ENCODE measurements at regions of chr16 and their contacts with region 1.

Region 1: DNA sequence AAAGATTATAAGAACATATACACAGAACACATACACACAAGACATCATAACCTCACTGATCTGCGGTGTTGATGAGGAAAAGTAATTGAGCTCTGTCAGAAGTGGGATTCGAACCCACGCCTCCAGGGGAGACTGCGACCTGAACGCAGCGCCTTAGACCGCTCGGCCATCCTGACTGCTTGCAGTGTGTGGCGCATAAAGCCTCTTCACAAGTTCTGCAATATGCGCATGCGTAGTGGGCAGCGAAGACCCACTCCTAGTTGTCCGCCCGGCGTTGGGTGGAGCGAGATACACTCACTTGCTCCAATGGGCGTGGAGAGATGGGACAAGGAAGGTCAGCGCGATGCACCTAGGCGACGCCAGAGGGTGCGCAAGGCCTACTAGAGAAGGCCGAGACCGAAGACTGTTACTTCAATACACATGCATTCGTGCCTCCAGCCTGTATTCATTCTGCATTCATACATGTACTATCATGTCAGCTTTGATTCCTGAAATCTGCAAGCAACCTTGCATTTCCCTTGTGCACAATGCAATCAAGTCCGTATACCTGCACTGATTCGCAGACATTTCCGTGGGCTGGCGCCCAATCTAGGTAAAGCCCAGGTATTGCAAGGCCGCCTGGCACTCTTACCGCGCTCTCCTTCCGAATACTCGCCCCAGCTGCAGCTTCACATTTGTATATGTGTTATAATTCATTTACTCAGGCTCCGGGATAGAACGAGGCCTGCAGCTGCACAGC is 16.1 kb upstream of the PLLP start:
- DNase-seq: peak; percentile 98 to 100 (median 99)
- ATAC-seq: peak; percentile 96
- H3K4me3 ChIP-seq: peak overlapping the region; percentile 65
- H3K4me3 Mint-ChIP-seq: no peak overlapping the region
- H3K27ac ChIP-seq: peak overlapping the region; percentile 75
- H3K27ac Mint-ChIP-seq: no peak overlapping the region
- H3K4me1 ChIP-seq: peaks cover 16 to 28% of the 10 kb centered on the region in 2 donors
- H3K4me1 Mint-ChIP-seq: peaks cover 4 to 24% (median 11%) of the 10 kb centered on the region in 7 donors
- H3K27me3 ChIP-seq: no peaks in the 10 kb centered on the region
- H3K27me3 Mint-ChIP-seq: peaks cover 0 to 4% (median 0%) of the 10 kb centered on the region in 5 donors

Region 2: DNA sequence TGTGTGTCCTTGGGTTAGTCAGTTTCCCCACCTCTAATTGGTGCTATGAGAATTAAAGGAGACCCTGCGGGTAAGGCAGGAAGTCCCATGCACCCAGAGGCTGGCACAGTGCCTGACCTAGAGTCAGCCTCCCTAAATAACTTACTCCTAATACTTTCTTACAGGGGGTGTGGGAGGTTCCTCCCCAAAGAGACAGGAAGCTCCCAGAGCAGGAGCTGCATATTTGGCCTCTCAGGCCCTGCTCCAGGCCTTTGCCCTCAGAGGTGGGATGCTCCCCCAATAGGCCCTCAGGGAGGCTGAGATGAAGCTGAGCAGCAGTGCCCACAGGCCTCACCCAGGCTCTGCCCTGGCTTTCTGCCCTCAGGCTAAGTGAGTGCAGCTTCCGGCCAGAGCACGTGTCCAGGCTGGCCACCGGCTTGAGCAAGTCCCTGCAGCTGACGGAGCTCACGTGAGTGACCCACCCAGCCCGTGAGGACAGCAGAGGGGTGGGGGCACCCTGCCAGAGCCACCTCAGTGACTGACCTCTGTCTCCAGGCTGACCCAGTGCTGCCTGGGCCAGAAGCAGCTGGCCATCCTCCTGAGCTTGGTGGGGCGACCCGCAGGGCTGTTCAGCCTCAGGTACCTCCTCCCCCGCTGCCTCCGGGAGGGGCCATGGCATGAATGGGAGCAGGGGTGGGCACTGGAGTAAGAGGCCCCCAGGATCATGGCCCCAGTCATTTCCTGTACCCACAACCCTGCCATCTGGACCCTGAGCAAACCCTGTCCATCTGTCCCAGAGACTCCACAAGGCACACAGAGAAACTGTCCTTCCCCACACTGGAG is 239.3 kb before region 1 on chr16:
- CTCF ChIA-PET with region 1: no interaction called
- POLR2A ChIA-PET with region 1: no interaction called
- intact Hi-C with region 1: no loop called
- DNase-seq: no peak
- ATAC-seq: peak; percentile 50
- H3K4me3 ChIP-seq: no peak overlapping the region
- H3K4me3 Mint-ChIP-seq: peak overlapping the region in 1 of 10 donors; percentile 44
- H3K27ac ChIP-seq: peak overlapping the region; percentile 16
- H3K27ac Mint-ChIP-seq: peak overlapping the region; percentile 8 to 92 (median 75)
- H3K4me1 ChIP-seq: no peaks in the 10 kb centered on the region
- H3K4me1 Mint-ChIP-seq: peaks cover 4 to 32% (median 17%) of the 10 kb centered on the region in 7 donors
- H3K27me3 ChIP-seq: no peaks in the 10 kb centered on the region
- H3K27me3 Mint-ChIP-seq: no peaks in the 10 kb centered on the region

Region 3: GRCh38 chr16:57185944-57186871 is 114.3 kb before region 1 on chr16 and contains the starts of genes PSME3IP1 and RSPRY1:
- CTCF ChIA-PET with region 1: interaction called, 3 read pairs
- POLR2A ChIA-PET with region 1: interaction called, 3 read pairs
- intact Hi-C with region 1: loop called (anchors 1 kb)
- DNase-seq: peak; percentile 86 to 100 (median 99)
- ATAC-seq: peak; percentile 92
- H3K4me3 ChIP-seq: peak within 1 kb of the TSS; percentile 95
- H3K4me3 Mint-ChIP-seq: peak within 1 kb of the TSS; percentile 93 to 100 (median 98)
- H3K27ac ChIP-seq: peak within 1 kb of the TSS; percentile 94
- H3K27ac Mint-ChIP-seq: peak within 1 kb of the TSS; percentile 93 to 99 (median 95)
- H3K4me1 ChIP-seq: peaks cover 20 to 24% of the 10 kb centered on the region in 2 donors
- H3K4me1 Mint-ChIP-seq: peaks cover 41 to 77% (median 59%) of the 10 kb centered on the region in 7 donors
- H3K27me3 ChIP-seq: no peaks in the 10 kb centered on the region
- H3K27me3 Mint-ChIP-seq: peaks cover 0 to 3% (median 0%) of the 10 kb centered on the region in 5 donors
- total RNA-seq, gene PSME3IP1: 109 to 159 (median 140) TPM
- total RNA-seq, gene RSPRY1: 24.1 to 40.5 (median 33.6) TPM

Region 4: DNA sequence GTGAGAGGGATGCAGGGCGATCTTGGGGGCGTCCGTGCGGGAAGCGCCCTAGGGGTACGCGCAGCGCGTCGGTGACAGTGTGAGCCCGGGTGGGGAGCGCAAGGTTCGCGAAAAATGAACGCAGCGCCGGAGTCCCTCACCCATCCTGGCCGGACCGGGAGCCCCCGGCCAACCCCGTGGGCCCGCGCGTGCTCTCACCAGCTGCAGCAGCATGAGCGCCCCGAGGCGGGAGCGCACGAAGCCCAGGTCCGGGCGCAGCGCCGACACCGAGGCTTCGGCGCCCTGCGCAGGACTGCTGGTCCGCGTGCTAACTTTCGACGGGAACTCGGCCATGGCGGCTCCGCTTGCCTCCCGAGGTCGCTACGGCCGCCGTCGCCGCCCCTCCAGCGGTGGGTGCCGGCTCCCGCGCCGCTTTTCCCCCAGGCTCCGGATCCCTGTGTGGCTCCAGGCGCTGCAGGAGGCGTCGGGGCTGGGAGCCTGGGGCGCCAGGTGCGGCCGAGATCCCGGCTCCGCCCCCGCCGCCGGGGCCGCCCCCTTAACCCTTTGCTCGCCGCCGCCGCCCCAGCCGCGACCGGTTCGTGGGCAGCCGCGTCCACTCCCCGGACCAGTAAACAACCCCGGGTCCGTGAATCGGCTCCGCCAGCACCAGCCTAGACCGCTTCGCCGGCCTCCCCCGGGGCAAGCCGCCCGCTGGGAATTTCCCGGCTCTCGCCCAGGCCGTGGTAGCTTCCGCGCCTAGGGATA is 16.2 kb before region 1 on chr16 and contains the start of gene PLLP:
- CTCF ChIA-PET with region 1: interaction called, 9 read pairs
- POLR2A ChIA-PET with region 1: interaction called, 5 read pairs
- intact Hi-C with region 1: loop called (anchors 1 kb)
- DNase-seq: peak; percentile 30 to 66 (median 51)
- ATAC-seq: peak; percentile 82
- H3K4me3 ChIP-seq: peak within 1 kb of the TSS; percentile 60
- H3K4me3 Mint-ChIP-seq: peak within 1 kb of the TSS; percentile 77 to 89 (median 84)
- H3K27ac ChIP-seq: peak within 1 kb of the TSS; percentile 59
- H3K27ac Mint-ChIP-seq: peak within 1 kb of the TSS in 8 of 9 donors; percentile 10 to 94 (median 64)
- H3K4me1 ChIP-seq: peaks cover 0 to 25% of the 10 kb centered on the region in 2 donors
- H3K4me1 Mint-ChIP-seq: peaks cover 20 to 51% (median 41%) of the 10 kb centered on the region in 7 donors
- H3K27me3 ChIP-seq: peaks cover 0 to 8% of the 10 kb centered on the region in 2 donors
- H3K27me3 Mint-ChIP-seq: peaks cover 0 to 41% (median 0%) of the 10 kb centered on the region in 5 donors
- total RNA-seq, gene PLLP: 0.36 to 8.4 (median 3.3) TPM

Region 5: GRCh38 chr16:57341441-57342303 is 41.1 kb after region 1 on chr16:
- CTCF ChIA-PET with region 1: no interaction called
- POLR2A ChIA-PET with region 1: no interaction called
- intact Hi-C with region 1: no loop called
- DNase-seq: no peak
- ATAC-seq: no peak
- H3K4me3 ChIP-seq: no peak overlapping the region
- H3K4me3 Mint-ChIP-seq: no peak overlapping the region
- H3K27ac ChIP-seq: no peak overlapping the region
- H3K27ac Mint-ChIP-seq: no peak overlapping the region
- H3K4me1 ChIP-seq: no peaks in the 10 kb centered on the region
- H3K4me1 Mint-ChIP-seq: peaks cover 0 to 26% (median 16%) of the 10 kb centered on the region in 7 donors
- H3K27me3 ChIP-seq: no peaks in the 10 kb centered on the region
- H3K27me3 Mint-ChIP-seq: peaks cover 17 to 54% (median 32%) of the 10 kb centered on the region in 5 donors

Region 6: DNA sequence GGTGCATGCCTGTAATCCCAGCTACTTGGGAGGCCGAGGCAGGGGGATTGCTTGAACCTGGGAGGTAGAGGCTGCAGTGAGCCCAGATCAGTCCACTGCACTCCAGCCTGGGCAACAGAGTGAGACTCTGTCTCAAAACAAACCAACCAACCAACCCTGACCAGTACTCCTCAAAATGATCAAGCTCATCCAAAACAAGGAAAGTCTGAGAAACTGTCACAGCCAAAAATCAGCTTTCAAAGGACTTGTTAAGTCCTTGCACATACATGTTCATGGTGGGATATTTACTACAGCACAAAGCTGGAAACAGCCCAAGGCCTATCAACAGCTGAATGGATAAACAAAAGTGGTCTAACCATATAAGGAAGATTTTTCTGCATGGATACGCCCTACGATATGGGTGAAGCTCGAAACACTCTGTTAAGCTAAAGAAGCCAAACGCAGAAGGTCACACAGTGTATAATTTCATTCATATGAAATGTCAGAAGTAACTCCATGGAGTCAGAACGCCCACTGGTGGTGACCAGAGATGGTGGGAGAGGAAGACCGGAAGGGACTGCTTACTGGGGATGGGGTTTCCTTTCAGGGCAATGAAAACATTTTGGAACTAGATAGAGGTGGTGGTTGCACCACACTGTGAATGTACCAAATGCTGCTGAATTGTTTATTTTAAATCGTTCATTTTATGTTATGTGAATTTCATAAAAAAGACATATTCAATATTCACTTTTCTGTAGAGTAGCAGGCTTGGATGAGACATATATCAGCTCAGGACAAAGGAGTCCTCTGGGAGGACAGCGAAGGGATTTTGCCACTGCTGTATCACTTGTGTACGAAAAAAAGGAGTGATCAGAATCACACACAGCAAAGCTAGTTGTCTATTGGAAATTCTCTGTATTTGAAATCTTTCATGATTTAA is 121.7 kb after region 1 on chr16:
- CTCF ChIA-PET with region 1: interaction called, 83 read pairs
- POLR2A ChIA-PET with region 1: interaction called, 33 read pairs
- intact Hi-C with region 1: loop called (anchors 1 kb)
- DNase-seq: no peak
- ATAC-seq: no peak
- H3K4me3 ChIP-seq: no peak overlapping the region
- H3K4me3 Mint-ChIP-seq: no peak overlapping the region
- H3K27ac ChIP-seq: no peak overlapping the region
- H3K27ac Mint-ChIP-seq: peak overlapping the region in 1 of 9 donors; percentile 48
- H3K4me1 ChIP-seq: peaks cover 9 to 10% of the 10 kb centered on the region in 2 donors
- H3K4me1 Mint-ChIP-seq: peaks cover 11 to 29% (median 24%) of the 10 kb centered on the region in 7 donors
- H3K27me3 ChIP-seq: no peaks in the 10 kb centered on the region
- H3K27me3 Mint-ChIP-seq: no peaks in the 10 kb centered on the region

Region 7: DNA sequence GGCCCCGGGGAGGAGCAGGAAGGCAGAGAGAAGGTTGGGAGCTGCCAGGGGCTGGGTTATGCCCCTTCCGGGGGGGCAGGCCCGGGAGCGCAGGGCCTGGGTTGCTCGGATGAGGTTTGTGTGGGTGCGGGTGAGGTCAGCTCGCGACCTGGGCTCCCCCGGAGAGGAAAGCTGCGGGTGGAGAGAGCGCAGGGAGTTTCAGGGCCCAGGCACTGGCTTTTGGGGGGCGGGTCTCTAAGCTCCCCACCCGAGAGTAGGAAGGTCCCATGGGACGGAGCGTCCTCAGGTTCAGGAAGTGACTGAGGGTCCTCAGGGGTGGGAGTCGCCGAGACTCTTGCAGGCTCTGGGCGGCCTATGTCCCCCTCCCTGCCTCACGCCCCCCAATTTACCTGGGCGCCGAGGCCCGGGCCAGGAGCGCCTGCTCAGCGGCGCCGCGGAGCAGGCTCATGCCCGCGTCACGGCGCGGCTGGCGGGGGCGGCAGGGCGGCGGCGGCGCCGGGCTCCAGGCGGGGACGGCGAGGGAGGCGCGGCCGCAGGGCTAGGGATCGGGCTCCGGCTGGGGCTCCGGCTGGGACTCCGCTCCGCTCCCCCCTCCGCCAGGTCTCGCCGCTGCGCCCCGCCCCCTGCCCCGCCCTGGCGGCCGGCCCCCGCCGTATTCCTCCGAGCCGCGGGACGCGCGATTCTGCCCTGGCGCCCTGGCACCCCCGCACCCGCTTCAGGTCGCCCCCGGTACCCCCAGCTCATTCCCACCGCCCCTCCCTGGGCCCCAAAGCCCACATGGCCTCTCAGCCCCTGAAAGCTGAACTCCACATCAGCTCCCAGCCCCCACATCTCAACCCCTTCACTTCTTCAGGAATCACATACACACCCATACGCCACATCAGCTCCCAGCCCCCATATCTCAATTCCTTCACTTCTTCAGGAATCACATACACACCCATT is 185.6 kb after region 1 on chr16 and contains the start of gene DOK4:
- CTCF ChIA-PET with region 1: interaction called, 4 read pairs
- POLR2A ChIA-PET with region 1: no interaction called
- intact Hi-C with region 1: loop called (anchors 1 kb)
- DNase-seq: peak; percentile 47 to 87 (median 65)
- ATAC-seq: peak; percentile 97
- H3K4me3 ChIP-seq: peak within 1 kb of the TSS; percentile 59
- H3K4me3 Mint-ChIP-seq: peak within 1 kb of the TSS; percentile 82 to 97 (median 87)
- H3K27ac ChIP-seq: peak within 1 kb of the TSS; percentile 64
- H3K27ac Mint-ChIP-seq: peak within 1 kb of the TSS in 8 of 9 donors; percentile 36 to 86 (median 54)
- H3K4me1 ChIP-seq: peaks cover 9 to 17% of the 10 kb centered on the region in 2 donors
- H3K4me1 Mint-ChIP-seq: peaks cover 11 to 30% (median 19%) of the 10 kb centered on the region in 7 donors
- H3K27me3 ChIP-seq: no peaks in the 10 kb centered on the region
- H3K27me3 Mint-ChIP-seq: peaks cover 0 to 19% (median 0%) of the 10 kb centered on the region in 5 donors
- total RNA-seq, gene DOK4: 2.2 to 4.0 (median 2.9) TPM

Region 8: DNA sequence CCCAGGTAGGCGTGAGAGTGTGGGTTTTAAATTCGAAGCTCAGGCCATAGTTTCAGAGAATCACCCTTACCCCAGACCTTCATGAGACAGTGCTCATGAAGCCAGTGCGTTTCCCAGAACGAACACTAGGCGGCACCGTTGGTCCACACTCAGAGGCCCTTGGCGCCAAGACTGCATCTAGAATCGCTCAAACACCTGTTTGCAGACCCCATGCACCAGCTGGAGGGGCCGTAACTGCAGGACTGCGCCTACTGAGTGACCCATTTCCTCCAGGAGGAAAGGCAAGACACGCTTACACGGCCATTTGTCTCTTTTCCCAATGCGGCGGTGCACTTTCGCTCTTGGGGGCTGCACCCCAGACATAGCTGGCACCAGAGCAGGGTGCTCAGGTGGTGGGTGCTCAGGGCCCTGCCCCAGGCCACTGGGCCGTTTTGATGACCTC is 275.9 kb after region 1 on chr16:
- CTCF ChIA-PET with region 1: no interaction called
- POLR2A ChIA-PET with region 1: no interaction called
- intact Hi-C with region 1: loop called in 1 of 2 experiments (anchors 1 kb)
- DNase-seq: peak; percentile 55 to 83 (median 72)
- ATAC-seq: peak; percentile 87
- H3K4me3 ChIP-seq: no peak overlapping the region
- H3K4me3 Mint-ChIP-seq: no peak overlapping the region
- H3K27ac ChIP-seq: no peak overlapping the region
- H3K27ac Mint-ChIP-seq: peak overlapping the region in 1 of 9 donors; percentile 96
- H3K4me1 ChIP-seq: peaks cover 0 to 44% of the 10 kb centered on the region in 2 donors
- H3K4me1 Mint-ChIP-seq: peaks cover 0 to 45% (median 6%) of the 10 kb centered on the region in 7 donors
- H3K27me3 ChIP-seq: no peaks in the 10 kb centered on the region
- H3K27me3 Mint-ChIP-seq: peaks cover 0 to 6% (median 4%) of the 10 kb centered on the region in 5 donors

Measured in naive thymus-derived CD4-positive, alpha-beta T cell (primary cell).